HEK293T (cell line): ENCODE measurements at regions of chr1 and their contacts with region 1.

Region 1: GRCh38 chr1:18234790-18235242 is 127.2 kb downstream of the IGSF21 start:
- DNase-seq: peak; percentile 79

Region 2: GRCh38 chr1:18142471-18142870 is 92.3 kb before region 1 on chr1:
- CTCF ChIA-PET with region 1: no interaction called
- POLR2A ChIA-PET with region 1: no interaction called
- DNase-seq: no peak

Region 3: GRCh38 chr1:18160290-18160942 is 74.4 kb before region 1 on chr1:
- CTCF ChIA-PET with region 1: no interaction called
- POLR2A ChIA-PET with region 1: no interaction called
- DNase-seq: no peak

Region 4: DNA sequence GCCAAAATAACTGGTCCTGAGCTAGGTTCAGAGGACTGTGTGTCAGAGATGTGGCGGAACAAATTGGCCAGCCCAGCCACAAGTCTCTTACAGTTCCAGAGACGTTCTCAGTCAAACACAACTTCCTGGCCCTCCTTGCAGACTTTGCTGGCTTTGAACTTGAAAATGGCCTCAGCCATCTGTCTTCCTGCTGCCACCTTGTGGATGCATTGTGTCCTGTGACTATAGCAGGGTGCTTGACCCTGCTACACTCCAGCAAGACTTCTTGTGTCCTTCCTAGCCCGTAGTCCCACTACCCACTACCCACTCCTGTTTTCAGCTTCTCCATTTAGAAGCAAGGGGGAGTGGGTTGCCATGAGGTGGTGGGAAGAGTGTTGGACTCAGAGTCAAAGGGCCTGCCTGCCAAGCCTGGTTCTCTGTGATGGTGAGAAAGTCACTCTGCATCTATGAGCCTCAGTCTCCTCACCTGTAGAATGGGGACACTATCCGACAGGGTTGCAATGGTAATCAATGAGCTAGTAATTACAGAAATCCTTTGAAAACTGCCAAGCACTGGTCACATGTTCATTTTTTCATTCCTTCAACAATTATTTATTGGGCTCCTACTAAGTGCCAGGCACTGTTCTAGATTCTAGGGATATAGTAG is 17.3 kb before region 1 on chr1:
- CTCF ChIA-PET with region 1: interaction called, 10 read pairs
- POLR2A ChIA-PET with region 1: no interaction called
- DNase-seq: peak; percentile 65

Region 5: GRCh38 chr1:18246543-18246942 is 11.7 kb after region 1 on chr1:
- CTCF ChIA-PET with region 1: interaction called, 18 read pairs
- POLR2A ChIA-PET with region 1: no interaction called
- DNase-seq: peak; percentile 31